Naive thymus-derived CD8-positive, alpha-beta T cell (primary cell): ENCODE measurements at regions of chr2 and their contacts with region 1.

Region 1: GRCh38 chr2:38377050-38377828 is at the start of gene ATL2:
- DNase-seq: peak; percentile 87 to 95 (median 90)
- ATAC-seq: peak; percentile 81 to 83
- H3K4me3 Mint-ChIP-seq: peak within 1 kb of the TSS; percentile 87 to 99 (median 98)
- H3K27ac Mint-ChIP-seq: peak within 1 kb of the TSS; percentile 87 to 98 (median 96)
- H3K4me1 Mint-ChIP-seq: peaks cover 36 to 73% (median 67%) of the 10 kb centered on the region in 4 donors
- H3K27me3 Mint-ChIP-seq: no peaks in the 10 kb centered on the region
- polyA plus RNA-seq, gene ATL2: 10.6 to 24.2 (median 14.2) TPM

Region 2: DNA sequence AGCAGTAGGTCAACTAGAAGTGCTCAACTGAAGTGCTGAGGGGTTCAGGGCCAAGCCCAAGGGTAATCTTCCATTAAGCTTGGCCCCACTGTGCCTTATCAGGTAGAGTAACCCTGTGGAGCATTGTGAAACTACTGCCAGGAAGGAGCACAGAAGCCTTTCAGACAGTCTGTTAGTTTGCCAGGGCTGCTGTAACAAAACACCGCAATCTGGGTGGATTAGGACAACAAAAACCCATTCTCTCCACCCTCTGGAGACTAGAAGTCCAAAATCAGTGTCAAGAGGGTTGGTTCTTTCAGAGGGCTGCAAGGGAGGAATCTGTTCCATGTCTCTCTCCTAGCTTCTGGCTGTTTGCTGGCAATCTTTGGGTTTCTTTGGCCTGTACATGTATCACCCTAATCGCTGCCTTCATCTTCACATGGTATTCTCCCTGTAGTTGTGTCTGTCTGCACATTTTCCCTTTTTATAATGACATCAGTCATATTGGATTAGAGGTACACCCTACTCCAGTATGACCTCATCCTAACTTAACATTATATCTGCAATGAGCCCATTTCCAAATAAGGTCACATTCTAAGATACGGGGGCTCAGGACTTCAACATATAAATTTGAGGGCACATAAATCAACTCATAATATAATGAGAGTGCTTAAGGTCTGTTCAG is 1659.5 kb before region 1 on chr2:
- POLR2A ChIA-PET with region 1: no interaction called
- DNase-seq: no peak
- ATAC-seq: no peak
- H3K4me3 Mint-ChIP-seq: no peak overlapping the region
- H3K27ac Mint-ChIP-seq: no peak overlapping the region
- H3K4me1 Mint-ChIP-seq: peaks cover 0 to 3% (median 0%) of the 10 kb centered on the region in 4 donors
- H3K27me3 Mint-ChIP-seq: peaks cover 0 to 18% (median 1%) of the 10 kb centered on the region in 5 donors

Region 3: DNA sequence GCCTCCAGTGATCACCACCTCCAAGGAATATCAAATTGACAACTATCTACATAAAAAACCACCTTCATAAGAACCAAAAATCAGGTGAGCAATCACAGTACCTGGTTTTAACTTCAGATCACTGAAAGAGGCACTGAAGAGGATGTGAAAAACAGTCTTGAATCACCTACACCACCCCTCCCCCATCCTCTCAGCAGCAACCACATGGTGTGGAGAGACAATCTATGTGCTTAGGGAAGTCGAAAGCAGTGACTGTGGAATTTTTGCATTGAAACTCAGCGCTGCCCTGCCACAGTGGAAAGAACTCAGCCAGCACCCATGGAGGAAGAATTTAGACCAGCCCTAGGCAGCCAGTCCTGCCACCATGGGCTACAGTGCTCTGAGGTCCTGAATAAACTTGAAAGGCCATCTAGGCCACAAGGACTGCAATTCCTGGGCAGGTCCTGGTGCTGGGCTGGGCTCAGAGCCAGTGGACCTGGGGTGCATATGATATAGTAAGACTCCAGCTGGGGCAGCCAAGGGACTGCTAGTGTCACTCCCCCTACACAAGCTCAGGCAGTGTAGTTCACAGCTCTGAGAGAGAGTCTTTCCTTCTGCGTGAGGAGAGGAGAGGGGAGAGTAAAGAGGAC is 75.8 kb before region 1 on chr2:
- POLR2A ChIA-PET with region 1: no interaction called
- DNase-seq: no peak
- ATAC-seq: no peak
- H3K4me3 Mint-ChIP-seq: no peak overlapping the region
- H3K27ac Mint-ChIP-seq: peak overlapping the region in 7 of 10 donors; percentile 9 to 82 (median 58)
- H3K4me1 Mint-ChIP-seq: peaks cover 33 to 51% (median 41%) of the 10 kb centered on the region in 4 donors
- H3K27me3 Mint-ChIP-seq: no peaks in the 10 kb centered on the region

Region 4: DNA sequence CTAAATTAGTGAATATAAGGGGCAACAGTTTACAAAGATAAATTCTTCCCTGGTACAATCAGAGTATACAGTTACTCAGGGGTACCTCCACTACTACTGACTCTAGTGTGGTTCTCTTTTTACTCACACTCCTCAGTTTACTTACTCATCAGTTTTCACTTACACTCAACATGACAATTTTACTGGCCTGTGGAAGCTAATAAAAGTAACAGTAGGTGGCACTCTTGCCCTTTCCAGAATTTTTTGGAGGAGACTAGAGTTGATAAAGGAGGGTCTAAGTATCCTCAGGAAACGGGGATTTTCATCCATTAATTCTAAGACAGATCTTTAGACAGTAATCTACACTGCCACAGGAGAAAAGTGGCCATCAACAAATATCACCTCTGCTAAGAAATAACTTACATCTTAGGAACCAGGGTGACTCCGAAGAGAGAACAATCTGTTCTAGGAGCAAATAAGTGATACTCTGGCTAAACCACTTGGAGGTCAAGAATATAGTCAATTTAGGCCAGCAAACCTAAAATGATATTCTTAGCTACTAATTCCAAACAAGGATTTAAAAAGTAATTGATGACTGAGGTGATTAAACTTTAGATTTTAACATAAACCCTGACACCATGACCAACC is 61.4 kb before region 1 on chr2:
- POLR2A ChIA-PET with region 1: interaction called, 11 read pairs
- DNase-seq: peak in 7 of 10 donors; percentile 20 to 57 (median 50)
- ATAC-seq: peak; percentile 41 to 44
- H3K4me3 Mint-ChIP-seq: no peak overlapping the region
- H3K27ac Mint-ChIP-seq: no peak overlapping the region
- H3K4me1 Mint-ChIP-seq: peaks cover 0 to 3% (median 0%) of the 10 kb centered on the region in 4 donors
- H3K27me3 Mint-ChIP-seq: no peaks in the 10 kb centered on the region